ENCODE measurements at regions of chr6 and their contacts with region 1.

Region 1: DNA sequence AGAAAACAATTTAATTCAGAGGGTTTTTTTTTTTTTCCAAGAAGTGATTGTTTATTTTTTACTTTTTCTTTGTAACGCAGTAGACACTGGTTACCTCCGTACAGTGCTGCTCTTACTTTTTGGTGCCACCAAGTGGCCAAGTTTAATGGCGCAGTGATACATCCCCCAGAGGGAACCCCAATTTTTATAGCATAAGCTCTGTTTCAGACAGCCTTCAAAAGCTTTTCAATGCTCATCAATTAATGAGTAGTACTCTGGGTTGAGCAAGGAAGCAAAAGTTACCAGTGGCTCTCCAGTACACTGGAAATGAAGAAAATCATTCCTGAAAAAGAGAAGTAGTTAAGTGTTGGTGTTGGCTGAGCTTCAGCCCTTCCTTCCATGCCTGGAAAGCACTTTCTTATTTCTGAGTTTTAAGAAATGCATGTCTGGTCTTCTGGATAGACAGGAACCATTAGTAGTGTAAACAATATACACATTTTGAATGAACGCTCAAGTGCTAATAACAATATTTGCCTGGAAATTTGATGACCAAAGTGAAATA is 129.1 kb upstream of the SMLR1 start:
- DNase-seq: peak; percentile 64
- H3K4me3 Mint-ChIP-seq: no peak overlapping the region
- H3K27ac Mint-ChIP-seq: no peak overlapping the region
- H3K4me1 Mint-ChIP-seq: no peaks in the 10 kb centered on the region
- H3K27me3 Mint-ChIP-seq: peaks cover 16% of the 10 kb centered on the region
- CTCF ChIP-seq: peak; percentile 75

Region 2: DNA sequence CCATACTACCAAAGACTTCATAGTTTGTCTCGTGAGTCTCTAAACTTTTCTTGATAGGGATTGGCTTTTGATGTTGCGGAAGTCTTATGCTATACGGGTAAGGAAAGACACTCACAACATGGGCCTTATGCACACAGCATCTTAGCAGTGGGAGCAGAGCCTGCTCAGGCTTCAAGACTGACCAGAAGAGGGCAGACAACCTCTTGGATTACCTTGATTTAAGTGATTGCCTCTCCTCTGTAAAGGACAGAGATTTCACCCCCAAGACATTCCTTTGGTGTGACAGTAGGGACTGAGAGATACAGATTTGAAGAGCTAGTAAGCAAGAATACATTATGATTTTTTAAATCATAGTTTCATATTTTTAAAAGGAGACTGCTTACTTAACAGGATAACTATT is 404.3 kb before region 1 on chr6:
- CTCF ChIA-PET with region 1: interaction called, 10 read pairs
- POLR2A ChIA-PET with region 1: no interaction called
- intact Hi-C with region 1: loop called (anchors 1 kb)
- DNase-seq: peak; percentile 66
- H3K4me3 Mint-ChIP-seq: no peak overlapping the region
- H3K27ac Mint-ChIP-seq: no peak overlapping the region
- H3K4me1 Mint-ChIP-seq: no peaks in the 10 kb centered on the region
- H3K27me3 Mint-ChIP-seq: peaks cover 7% of the 10 kb centered on the region
- CTCF ChIP-seq: peak; percentile 46

Region 3: GRCh38 chr6:130314271-130314670 is 383.8 kb before region 1 on chr6:
- CTCF ChIA-PET with region 1: interaction called, 14 read pairs
- POLR2A ChIA-PET with region 1: no interaction called
- intact Hi-C with region 1: no loop called
- DNase-seq: no peak
- H3K4me3 Mint-ChIP-seq: no peak overlapping the region
- H3K27ac Mint-ChIP-seq: no peak overlapping the region
- H3K4me1 Mint-ChIP-seq: no peaks in the 10 kb centered on the region
- H3K27me3 Mint-ChIP-seq: peaks cover 2% of the 10 kb centered on the region
- CTCF ChIP-seq: no peak

Region 4: GRCh38 chr6:130322673-130323268 is 375.3 kb before region 1 on chr6:
- CTCF ChIA-PET with region 1: interaction called, 145 read pairs
- POLR2A ChIA-PET with region 1: no interaction called
- intact Hi-C with region 1: loop called (anchors 1 kb)
- DNase-seq: peak; percentile 64
- H3K4me3 Mint-ChIP-seq: no peak overlapping the region
- H3K27ac Mint-ChIP-seq: no peak overlapping the region
- H3K4me1 Mint-ChIP-seq: peaks cover 9% of the 10 kb centered on the region
- H3K27me3 Mint-ChIP-seq: peaks cover 24% of the 10 kb centered on the region
- CTCF ChIP-seq: peak; percentile 78

Region 5: GRCh38 chr6:130716466-130716865 is 18.4 kb after region 1 on chr6:
- CTCF ChIA-PET with region 1: interaction called, 13 read pairs
- POLR2A ChIA-PET with region 1: no interaction called
- intact Hi-C with region 1: no loop called
- DNase-seq: no peak
- H3K4me3 Mint-ChIP-seq: no peak overlapping the region
- H3K27ac Mint-ChIP-seq: no peak overlapping the region
- H3K4me1 Mint-ChIP-seq: no peaks in the 10 kb centered on the region
- H3K27me3 Mint-ChIP-seq: peaks cover 14% of the 10 kb centered on the region
- CTCF ChIP-seq: no peak

Region 6: DNA sequence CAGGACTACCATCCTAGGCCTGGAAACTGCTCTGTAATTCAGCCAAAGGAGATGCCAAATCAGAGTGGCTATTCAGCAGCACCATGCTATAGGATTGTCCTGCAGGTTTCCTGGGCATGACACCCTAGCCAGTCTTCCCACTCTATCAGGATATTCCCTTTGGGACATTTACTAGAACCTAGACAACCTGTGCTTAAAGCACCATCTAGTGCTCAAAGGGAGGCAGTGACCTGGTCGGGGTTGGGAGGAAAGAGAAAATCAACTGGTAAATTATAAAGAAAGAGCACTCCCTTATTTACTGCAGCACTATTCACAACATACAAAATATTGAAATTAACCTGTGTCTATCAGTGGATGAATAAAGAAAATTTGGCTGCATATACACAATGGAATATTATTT is 61.9 kb after region 1 on chr6:
- CTCF ChIA-PET with region 1: interaction called, 4 read pairs
- POLR2A ChIA-PET with region 1: no interaction called
- intact Hi-C with region 1: loop called (anchors 2 kb)
- DNase-seq: peak; percentile 67
- H3K4me3 Mint-ChIP-seq: no peak overlapping the region
- H3K27ac Mint-ChIP-seq: no peak overlapping the region
- H3K4me1 Mint-ChIP-seq: no peaks in the 10 kb centered on the region
- H3K27me3 Mint-ChIP-seq: peaks cover 51% of the 10 kb centered on the region
- CTCF ChIP-seq: peak; percentile 57

Region 7: DNA sequence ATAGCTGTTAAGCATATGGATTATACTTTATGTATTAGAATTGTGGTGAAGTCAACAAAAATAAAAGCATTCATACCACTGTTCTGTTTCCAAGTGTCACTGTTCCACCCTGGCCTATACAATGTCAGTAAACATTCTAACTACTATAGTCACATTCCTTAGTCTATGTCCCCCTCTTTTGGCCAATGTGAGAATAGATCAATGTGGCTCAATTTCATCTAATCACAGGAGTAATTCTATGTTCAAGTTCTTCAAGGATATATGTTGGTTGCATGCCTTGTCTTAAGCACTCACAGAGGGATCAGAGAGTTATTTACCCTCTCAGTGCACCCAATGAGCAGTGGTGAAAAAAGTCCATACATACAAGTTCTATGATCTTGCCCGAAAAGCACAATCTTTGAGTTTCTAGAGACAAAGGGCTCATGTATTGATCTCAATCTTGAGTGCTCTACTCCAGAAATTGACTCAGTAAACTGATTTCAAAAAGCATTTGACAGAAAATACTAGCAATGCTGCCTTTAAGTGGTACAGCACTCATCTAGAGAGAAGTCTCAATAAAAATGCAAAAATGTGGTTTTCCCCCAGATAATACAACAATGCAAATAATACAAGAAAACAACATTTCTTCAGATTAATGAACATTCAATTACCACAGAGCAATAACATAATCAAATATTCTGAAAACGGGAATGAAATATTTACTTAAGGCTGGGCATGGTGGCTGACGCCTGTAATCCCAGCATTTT is 145.7 kb after region 1 on chr6:
- CTCF ChIA-PET with region 1: interaction called, 14 read pairs
- POLR2A ChIA-PET with region 1: no interaction called
- intact Hi-C with region 1: loop called (anchors 1 kb)
- DNase-seq: peak; percentile 71
- H3K4me3 Mint-ChIP-seq: no peak overlapping the region
- H3K27ac Mint-ChIP-seq: no peak overlapping the region
- H3K4me1 Mint-ChIP-seq: peaks cover 6% of the 10 kb centered on the region
- H3K27me3 Mint-ChIP-seq: no peaks in the 10 kb centered on the region
- CTCF ChIP-seq: peak; percentile 53

Region 8: DNA sequence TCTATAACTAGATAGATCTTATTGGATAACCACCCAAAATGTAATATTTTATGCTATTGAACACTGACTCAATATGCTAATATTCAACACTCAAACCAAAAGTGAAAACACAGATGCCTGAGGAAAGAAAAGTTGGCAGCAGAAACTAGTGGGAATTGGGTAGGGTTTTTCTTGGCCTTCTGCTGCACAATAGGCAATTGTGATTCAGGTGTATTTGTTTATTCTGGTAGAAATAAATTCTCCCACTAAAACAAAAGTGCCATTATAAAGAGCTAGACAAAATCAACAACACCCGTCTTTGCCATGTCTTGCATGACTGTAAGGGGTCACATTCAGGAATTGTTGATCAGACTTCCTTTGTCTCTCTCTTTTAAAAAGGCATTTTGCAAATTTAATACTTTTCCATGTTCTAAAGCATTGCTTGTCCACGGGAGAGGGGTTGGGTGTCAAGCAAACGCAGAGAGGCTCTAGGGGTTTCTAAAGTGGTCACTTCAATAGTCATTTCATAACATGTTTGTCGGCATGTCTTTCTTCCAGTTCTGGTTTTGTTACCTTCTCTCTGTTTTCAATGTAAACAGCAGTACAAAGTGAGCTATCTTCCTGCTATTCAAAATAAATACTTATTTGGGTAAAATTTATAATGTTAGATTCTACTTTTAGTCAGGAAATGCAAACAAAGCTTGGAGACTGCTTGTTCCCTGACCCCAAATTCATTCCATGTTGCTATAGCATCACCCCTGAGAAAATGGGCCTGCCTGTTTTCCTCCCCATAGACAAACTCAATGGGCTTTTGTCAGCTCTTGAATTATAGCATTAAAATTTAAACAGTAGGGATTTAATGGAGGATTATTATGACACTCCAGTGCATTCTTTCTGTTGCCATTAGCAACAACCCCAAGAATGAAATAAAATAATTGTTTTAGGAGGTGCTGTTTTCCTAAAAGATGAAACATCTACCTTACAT is 1470.1 kb after region 1 on chr6:
- CTCF ChIA-PET with region 1: no interaction called
- POLR2A ChIA-PET with region 1: no interaction called
- intact Hi-C with region 1: no loop called
- DNase-seq: no peak
- H3K4me3 Mint-ChIP-seq: no peak overlapping the region
- H3K27ac Mint-ChIP-seq: no peak overlapping the region
- H3K4me1 Mint-ChIP-seq: no peaks in the 10 kb centered on the region
- H3K27me3 Mint-ChIP-seq: no peaks in the 10 kb centered on the region
- CTCF ChIP-seq: no peak

Measured in MCF 10A (cell line).